ENCODE measurements at regions of chr11 and their contacts with region 1.

Region 1: DNA sequence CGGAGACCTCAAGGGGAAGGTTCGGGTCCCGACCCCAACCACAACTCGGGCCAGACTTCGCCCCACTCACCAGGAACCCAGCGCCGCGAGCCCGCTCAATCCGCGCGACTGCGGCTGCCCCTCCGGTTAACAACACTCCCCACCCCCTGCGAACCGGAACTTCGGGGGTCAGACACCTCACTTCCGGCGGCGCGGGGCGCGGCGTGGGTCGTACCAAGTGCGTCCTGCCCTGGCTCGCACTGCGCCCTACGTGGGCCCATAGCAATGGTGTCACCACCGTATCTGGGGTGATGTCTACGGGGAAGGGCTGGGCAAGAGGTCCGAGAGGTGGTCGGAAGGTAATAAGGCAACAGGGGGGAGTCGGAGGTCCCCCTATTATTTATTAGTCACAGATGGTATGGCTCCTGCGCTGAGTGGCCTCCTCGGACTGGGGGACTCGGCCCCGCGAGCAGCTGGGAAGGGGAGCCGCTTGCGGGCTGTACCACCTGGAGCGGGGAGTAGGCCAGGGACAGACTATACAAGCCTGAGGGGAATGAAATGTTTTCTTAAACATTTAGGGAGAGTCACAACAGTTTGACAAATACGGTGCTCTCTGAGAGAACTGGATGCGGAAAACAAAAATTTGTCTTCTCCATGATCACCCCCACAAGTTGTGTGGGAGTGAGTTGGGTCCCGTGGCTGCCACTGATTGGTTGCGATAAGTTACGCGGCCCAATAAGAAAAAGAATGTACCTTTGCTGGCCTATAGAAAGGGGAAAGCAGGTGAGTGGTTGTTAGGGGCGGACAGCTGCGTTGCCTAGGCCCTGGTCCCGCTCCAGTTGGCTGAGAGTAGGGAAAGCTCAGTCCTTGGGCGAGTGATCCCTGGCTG is at the start of gene SYVN1:
- DNase-seq: peak; percentile 97
- H3K4me3 ChIP-seq: peak within 1 kb of the TSS; percentile 88 to 96
- H3K27ac ChIP-seq: peak within 1 kb of the TSS; percentile 95 to 99
- H3K4me1 ChIP-seq: peaks cover 0 to 28% of the 10 kb centered on the region in 2 experiments; a peak in 2 of 4 replicates
- H3K27me3 ChIP-seq: no peaks in the 10 kb centered on the region
- CTCF ChIP-seq: no peak
- EP300 ChIP-seq: 0 out of 4 replicates have a peak, but pooled peaks of 1 of the 2 experiments have one; percentile 5
- RAD21 ChIP-seq: no peak
- polyA plus RNA-seq, gene SYVN1: 14.9 and 31.9 TPM in 2 replicates

Region 2: DNA sequence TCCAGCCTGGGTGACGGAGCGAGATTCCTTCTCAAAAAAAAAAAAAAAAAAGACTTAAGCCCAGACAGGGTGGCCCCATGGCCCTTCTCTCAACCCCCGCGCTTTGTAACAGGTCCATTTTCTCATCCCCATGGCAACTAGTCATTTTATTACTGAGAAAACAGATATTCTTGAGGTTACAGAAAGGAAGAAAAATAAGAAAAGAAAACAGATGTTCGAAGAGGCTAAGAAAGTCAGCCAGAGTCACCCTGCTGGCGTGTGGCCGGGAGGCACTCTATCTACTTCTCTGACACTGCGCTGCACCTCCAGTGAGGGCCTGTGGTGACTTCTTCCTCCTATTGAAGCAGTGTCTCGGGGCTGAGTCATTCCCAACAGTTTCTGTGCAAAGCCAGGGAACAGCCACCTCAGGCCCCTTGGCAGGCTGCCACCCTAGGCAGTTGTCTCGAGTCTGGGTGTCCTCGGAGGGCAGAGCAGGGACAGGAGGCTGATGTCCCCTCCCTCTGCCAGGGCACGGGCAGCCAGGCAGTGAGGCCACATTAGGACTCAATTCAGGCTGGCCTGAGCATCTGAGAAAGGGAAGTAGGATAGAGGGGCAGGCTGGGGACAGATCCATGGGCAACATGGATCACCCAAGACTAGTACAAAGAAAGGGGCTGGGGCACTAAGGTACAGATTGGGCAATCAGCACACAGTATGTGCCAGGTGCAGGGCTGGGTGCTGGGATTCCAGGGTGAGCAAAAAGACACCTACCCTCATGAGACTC is 16.1 kb after region 1 on chr11:
- CTCF ChIA-PET with region 1: interaction called, 13 read pairs
- POLR2A ChIA-PET with region 1: interaction called, 5 read pairs
- DNase-seq: peak; percentile 82
- H3K4me3 ChIP-seq: no peak overlapping the region
- H3K27ac ChIP-seq: peak overlapping the region; percentile 47 to 76
- H3K4me1 ChIP-seq: peaks cover 11% of the 10 kb centered on the region in 2 experiments; a peak in 2 of 4 replicates
- H3K27me3 ChIP-seq: no peaks in the 10 kb centered on the region
- CTCF ChIP-seq: no peak
- EP300 ChIP-seq: no peak
- RAD21 ChIP-seq: peak; percentile 28

Region 3: DNA sequence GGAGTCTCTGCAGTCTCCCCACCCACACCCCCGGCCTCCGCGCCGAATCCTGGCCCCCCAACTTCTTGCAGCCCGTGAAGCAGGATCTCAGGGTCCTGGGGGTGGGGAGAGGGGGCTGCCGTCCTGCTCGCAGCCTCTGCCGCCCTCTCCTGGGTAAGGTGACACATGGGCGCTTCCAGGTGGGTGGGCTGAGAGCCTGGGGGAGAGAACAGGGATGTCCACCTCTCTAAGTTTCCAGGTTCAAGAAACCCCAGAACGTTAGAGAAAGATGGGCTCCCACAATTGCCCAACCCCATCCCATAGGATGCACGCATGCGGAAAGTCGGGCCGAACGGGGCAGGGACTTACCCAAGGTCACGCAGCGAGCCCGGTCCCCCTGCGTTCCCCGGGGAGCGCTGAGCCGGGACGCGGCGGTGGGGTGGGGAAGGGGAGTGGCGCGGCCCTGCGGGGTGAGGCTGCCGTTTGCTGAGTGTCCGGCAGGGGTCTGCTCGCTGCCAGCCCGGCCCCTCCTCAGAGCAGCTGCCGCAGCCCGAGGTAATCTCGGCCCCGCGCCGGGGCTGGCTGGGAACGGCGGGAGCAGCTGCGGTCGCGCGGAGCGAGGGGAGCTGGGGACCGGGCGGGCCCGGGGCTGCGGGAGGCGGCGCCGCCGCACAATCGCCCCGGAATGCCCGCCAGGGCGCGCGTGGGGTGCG is 46.4 kb after region 1 on chr11:
- CTCF ChIA-PET with region 1: interaction called, 23 read pairs
- POLR2A ChIA-PET with region 1: interaction called, 25 read pairs
- DNase-seq: peak; percentile 96
- H3K4me3 ChIP-seq: peak overlapping the region; percentile 95 to 98
- H3K27ac ChIP-seq: peak overlapping the region in 1 of 2 experiments; percentile 75; a peak in 2 of 4 replicates
- H3K4me1 ChIP-seq: peaks cover 0 to 18% of the 10 kb centered on the region in 2 experiments; a peak in 2 of 4 replicates
- H3K27me3 ChIP-seq: no peaks in the 10 kb centered on the region
- CTCF ChIP-seq: peak; percentile 53
- EP300 ChIP-seq: no peak
- RAD21 ChIP-seq: peak; percentile 62

Measured in SK-N-SH (cell line).